PC-9 (cell line): ENCODE measurements at regions of chr5 and their contacts with region 1.

Region 1: GRCh38 chr5:37234288-37234687 is 14.9 kb downstream of the CPLANE1 start:
- DNase-seq: no peak
- H3K4me3 ChIP-seq: no peak overlapping the region
- H3K27ac ChIP-seq: no peak overlapping the region
- H3K4me1 ChIP-seq: no peaks in the 10 kb centered on the region
- H3K27me3 ChIP-seq: no peaks in the 10 kb centered on the region
- CTCF ChIP-seq: no peak

Region 2: GRCh38 chr5:37272564-37272963 is 38.3 kb after region 1 on chr5:
- CTCF ChIA-PET with region 1: interaction called, 12 read pairs
- POLR2A ChIA-PET with region 1: no interaction called
- intact Hi-C with region 1: no loop called
- DNase-seq: peak; percentile 89 to 94
- H3K4me3 ChIP-seq: no peak overlapping the region
- H3K27ac ChIP-seq: peak overlapping the region; percentile 83
- H3K4me1 ChIP-seq: peaks cover 29% of the 10 kb centered on the region
- H3K27me3 ChIP-seq: no peaks in the 10 kb centered on the region
- CTCF ChIP-seq: no peak